ENCODE measurements at regions of chr11 and their contacts with region 1.

Region 1: GRCh38 chr11:61446211-61446651 is 16.3 kb downstream of the SDHAF2 start:
- DNase-seq: peak; percentile 94
- ATAC-seq: peak; percentile 93 to 94

Region 2: DNA sequence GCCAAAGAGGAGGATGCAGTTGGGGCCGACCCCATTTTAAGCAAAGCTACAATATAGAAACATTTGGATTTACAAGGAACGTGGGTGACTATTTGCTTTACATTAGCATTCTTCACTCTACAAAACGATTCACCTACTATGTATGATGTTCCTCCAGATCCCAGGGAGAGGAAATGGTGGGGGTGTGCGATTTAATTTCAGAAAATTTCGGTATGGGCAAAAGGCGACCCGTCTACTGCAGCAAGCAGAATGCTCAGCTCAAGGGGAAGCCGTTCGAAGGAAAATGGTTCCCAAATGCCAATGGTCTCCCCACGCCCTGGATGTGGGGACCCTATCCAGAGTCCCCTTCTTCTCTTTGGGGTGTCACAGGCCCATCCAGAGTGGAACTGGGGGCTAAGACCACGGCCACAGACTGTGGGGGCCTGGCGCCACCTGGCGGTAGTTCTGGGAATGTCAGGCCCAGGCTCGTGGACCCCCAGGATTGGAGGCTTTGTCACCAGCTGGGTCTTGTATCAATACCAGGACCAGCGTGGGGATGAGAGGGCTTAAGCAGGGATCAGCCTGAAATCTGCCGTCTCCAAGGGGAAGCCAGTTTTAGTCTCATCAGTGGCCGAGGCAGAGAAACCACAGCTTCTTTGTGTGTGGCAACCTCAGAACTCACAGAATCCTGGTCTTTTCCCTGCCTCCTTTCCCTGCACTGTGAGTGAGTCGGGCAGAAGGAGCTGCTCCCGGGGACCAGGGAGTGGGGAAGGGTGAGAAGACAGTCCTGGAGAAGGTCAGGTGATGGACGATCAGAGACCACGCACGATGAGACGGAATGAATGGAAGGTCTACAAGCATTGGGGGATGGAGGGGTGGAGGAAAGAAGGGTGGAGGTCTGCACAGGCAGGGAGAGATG is 70.7 kb after region 1 on chr11:
- intact Hi-C with region 1: loop called in 1 of 2 experiments (anchors 2 kb)
- DNase-seq: no peak
- ATAC-seq: peak; percentile 43

Region 3: GRCh38 chr11:61639816-61640443 is 193.7 kb after region 1 on chr11:
- intact Hi-C with region 1: loop called in 1 of 2 experiments (anchors 10 kb)
- DNase-seq: no peak
- ATAC-seq: no peak

Measured in left cardiac atrium (tissue), 4 donors.